Activated CD4-positive, alpha-beta T cell treated with anti-CD3 and anti-CD28 coated beads for 36 hours (primary cell): ENCODE measurements at regions of chr1 and their contacts with region 1.

Region 1: DNA sequence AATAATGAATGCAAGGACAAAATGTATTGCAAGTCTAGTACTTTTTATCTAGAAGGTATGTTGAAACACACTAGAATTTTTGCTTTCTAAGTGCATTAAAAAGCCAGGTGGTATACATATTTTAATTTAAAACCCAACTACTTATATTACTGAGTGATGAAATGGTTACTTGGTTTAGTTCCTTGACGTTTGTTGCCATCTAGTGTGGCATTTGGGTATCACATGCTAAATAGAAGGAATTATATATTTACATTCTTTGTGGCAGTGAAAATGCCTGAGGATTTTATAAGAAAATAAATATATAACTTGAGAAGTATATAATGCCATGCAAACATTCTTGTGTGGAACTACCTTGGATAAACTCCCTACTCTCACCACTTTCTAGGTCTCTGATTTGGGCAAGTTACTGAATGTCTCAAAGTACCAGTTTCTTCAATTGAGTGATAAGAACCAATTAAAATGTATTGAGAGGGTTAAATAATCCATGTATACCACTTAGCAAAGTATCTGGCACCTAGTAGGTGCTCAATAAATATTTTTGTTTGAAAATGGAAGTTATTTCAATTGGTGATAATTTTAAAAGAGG is 69.6 kb downstream of the SDCCAG8 start:
- DNase-seq: peak; percentile 19
- ATAC-seq: no peak
- H3K4me3 Mint-ChIP-seq: no peak overlapping the region
- H3K27ac Mint-ChIP-seq: no peak overlapping the region
- H3K4me1 Mint-ChIP-seq: no peaks in the 10 kb centered on the region
- H3K27me3 Mint-ChIP-seq: no peaks in the 10 kb centered on the region

Region 2: DNA sequence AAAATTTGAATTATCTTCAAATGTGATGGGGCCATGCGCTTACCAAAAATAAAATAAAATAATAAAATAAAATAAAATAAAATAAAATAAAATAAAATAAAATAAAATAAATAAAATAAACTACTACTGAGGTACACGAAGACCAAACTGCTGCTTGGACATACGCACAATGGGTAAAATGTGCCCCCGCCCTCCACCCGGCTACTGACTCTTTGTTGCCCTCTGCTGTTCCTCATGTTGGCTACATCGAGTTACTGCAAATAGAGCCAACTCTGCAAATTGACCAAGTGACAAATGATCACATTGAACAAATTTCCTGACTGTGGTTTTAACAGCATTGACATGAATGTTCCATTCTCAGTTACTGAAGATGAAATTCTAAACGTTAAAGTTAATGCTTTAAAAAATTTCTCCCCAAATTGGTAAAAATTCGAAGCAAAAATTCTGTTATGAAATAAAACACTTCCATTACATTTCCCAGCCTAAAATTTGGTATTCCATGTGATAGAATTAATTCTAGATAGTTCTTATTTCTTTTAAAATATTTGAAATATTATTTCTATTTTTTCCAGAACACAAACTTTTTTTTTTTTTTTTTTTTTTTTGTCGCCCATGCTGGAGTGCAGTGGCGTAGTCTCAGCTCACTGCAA is 1307.7 kb before region 1 on chr1:
- CTCF ChIA-PET with region 1: no interaction called
- POLR2A ChIA-PET with region 1: no interaction called
- intact Hi-C with region 1: loop called in 1 of 2 experiments (anchors 10 kb)
- DNase-seq: peak; percentile 54
- ATAC-seq: peak; percentile 63
- H3K4me3 Mint-ChIP-seq: no peak overlapping the region
- H3K27ac Mint-ChIP-seq: no peak overlapping the region
- H3K4me1 Mint-ChIP-seq: no peaks in the 10 kb centered on the region
- H3K27me3 Mint-ChIP-seq: no peaks in the 10 kb centered on the region

Region 3: DNA sequence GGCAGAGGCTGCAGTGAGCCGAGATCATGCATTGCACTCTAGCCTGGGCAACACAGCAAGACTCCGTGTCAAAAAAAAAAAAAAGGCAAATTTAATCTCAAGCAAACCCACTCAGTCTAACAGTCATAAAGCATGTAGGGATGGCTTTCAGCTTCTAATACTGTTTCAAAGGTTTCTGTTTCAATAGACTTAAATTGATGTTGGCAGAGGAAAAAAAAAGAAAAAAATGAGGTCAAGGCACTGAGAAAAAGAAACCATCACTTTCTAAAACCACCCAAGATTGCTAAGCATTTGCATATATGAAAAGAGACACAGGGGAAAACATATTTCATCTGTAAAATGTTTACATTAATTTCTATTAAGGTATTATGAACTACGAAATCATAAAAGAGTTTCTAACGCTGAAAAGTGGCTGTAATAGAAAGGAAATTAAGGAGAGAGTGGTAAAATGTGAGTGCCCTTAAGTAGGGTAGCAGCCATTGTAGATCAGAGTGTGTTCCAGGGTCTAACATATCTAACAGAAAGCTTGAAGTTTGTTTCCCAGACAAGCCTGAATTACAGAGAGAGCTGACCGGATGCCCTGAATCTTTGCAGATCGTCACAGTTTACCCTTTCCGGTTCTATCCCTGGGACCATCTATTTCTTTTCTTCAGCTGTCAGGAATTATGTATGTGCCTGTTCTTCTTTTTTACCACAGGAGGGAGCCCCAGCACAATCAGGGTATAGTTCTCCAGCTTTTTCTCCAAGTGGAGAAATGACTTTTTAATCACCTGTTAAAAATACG is 870.9 kb before region 1 on chr1:
- CTCF ChIA-PET with region 1: no interaction called
- POLR2A ChIA-PET with region 1: no interaction called
- intact Hi-C with region 1: loop called in 1 of 2 experiments (anchors 2 kb)
- DNase-seq: no peak
- ATAC-seq: no peak
- H3K4me3 Mint-ChIP-seq: no peak overlapping the region
- H3K27ac Mint-ChIP-seq: no peak overlapping the region
- H3K4me1 Mint-ChIP-seq: no peaks in the 10 kb centered on the region
- H3K27me3 Mint-ChIP-seq: peaks cover 22% of the 10 kb centered on the region

Region 4: DNA sequence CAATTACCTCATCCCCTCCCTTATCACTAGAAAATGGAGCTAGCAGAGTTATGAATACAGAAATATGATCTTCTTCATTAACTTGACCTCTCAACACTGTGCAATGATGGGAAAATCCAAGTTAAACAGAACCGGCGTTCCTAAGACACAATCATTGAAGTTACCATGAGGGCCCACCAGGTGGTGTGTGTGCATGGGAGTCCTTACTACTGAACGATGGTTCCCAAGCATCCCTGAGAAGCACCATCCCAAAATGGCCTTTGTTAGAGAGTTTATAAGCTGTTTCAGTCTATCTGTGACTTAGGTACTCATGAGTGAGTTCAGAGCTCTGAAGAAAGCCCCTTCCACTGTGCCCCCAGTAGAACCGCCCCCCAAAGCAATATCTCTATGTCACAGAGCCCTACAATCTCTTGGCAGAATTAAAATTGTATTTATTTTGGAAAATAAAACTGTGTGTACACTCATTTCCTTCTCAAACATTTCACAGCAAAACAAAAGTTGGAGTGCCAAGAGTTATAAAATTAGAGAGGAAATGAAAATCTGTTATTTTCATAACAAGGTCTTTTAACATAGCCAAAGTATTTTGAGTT is 857.7 kb before region 1 on chr1:
- CTCF ChIA-PET with region 1: no interaction called
- POLR2A ChIA-PET with region 1: no interaction called
- intact Hi-C with region 1: loop called (anchors 1 to 5 kb)
- DNase-seq: peak; percentile 44
- ATAC-seq: peak; percentile 49
- H3K4me3 Mint-ChIP-seq: no peak overlapping the region
- H3K27ac Mint-ChIP-seq: no peak overlapping the region
- H3K4me1 Mint-ChIP-seq: no peaks in the 10 kb centered on the region
- H3K27me3 Mint-ChIP-seq: peaks cover 6% of the 10 kb centered on the region

Region 5: GRCh38 chr1:242651817-242652216 is 673.6 kb before region 1 on chr1:
- CTCF ChIA-PET with region 1: no interaction called
- POLR2A ChIA-PET with region 1: no interaction called
- intact Hi-C with region 1: loop called in 1 of 2 experiments (anchors 2 kb)
- DNase-seq: peak; percentile 17
- ATAC-seq: no peak
- H3K4me3 Mint-ChIP-seq: no peak overlapping the region
- H3K27ac Mint-ChIP-seq: no peak overlapping the region
- H3K4me1 Mint-ChIP-seq: no peaks in the 10 kb centered on the region
- H3K27me3 Mint-ChIP-seq: peaks cover 2% of the 10 kb centered on the region

Region 6: GRCh38 chr1:242847390-242847993 is 477.9 kb before region 1 on chr1:
- CTCF ChIA-PET with region 1: no interaction called
- POLR2A ChIA-PET with region 1: no interaction called
- intact Hi-C with region 1: loop called in 1 of 2 experiments (anchors 10 kb)
- DNase-seq: no peak
- ATAC-seq: no peak
- H3K4me3 Mint-ChIP-seq: no peak overlapping the region
- H3K27ac Mint-ChIP-seq: no peak overlapping the region
- H3K4me1 Mint-ChIP-seq: no peaks in the 10 kb centered on the region
- H3K27me3 Mint-ChIP-seq: no peaks in the 10 kb centered on the region

Region 7: GRCh38 chr1:243301059-243301458 is 24.3 kb before region 1 on chr1:
- CTCF ChIA-PET with region 1: no interaction called
- POLR2A ChIA-PET with region 1: no interaction called
- intact Hi-C with region 1: no loop called
- DNase-seq: no peak
- ATAC-seq: no peak
- H3K4me3 Mint-ChIP-seq: no peak overlapping the region
- H3K27ac Mint-ChIP-seq: no peak overlapping the region
- H3K4me1 Mint-ChIP-seq: no peaks in the 10 kb centered on the region
- H3K27me3 Mint-ChIP-seq: no peaks in the 10 kb centered on the region

Region 8: DNA sequence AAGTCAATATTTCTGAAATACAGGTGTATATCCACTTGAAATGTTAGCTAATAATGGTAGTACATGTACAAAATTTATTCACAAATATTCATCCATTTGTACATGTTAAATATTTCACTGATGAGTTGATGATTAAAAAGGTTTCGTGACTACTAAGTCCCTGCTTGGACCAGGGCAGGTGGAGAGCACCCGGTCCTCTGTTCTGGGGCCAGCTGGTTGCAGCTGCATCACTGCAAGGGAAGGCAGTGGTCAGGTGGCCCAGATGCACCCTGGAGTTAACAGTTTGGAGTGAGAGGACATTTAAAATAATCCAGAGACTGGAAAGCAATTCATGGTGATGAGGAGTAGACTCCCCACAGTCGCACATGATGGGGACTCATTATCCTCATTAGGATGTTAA is 866.9 kb after region 1 on chr1:
- CTCF ChIA-PET with region 1: no interaction called
- POLR2A ChIA-PET with region 1: no interaction called
- intact Hi-C with region 1: no loop called
- DNase-seq: no peak
- ATAC-seq: no peak
- H3K4me3 Mint-ChIP-seq: no peak overlapping the region
- H3K27ac Mint-ChIP-seq: no peak overlapping the region
- H3K4me1 Mint-ChIP-seq: no peaks in the 10 kb centered on the region
- H3K27me3 Mint-ChIP-seq: peaks cover 3% of the 10 kb centered on the region